Posterior vena cava (tissue), 2 donors: ENCODE measurements at regions of chr12 and their contacts with region 1.

Region 1: DNA sequence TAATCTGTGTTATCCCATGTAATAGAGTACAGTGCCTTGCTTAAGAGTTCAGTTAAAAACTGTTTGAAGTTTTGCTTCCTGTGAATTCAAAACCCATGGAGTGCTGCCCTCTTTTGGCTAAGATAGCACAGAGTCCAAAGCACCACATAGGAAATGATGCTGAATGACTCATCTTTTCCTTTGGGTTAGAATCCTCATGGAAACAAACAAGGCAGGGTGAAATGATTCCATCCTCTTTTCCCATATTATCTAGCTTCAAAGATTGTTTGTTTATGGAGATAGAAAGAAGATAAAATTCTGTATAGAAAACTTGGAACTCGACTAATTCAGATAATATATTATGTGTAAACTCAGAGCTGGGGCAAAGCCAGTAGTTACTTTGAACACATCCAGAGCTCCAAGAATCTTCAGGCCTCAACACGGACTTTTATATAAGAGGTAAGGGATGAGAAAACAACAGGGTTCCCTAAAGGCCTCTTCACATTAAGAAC is 87.4 kb downstream of the OTOGL start:
- DNase-seq: no peak

Region 2: DNA sequence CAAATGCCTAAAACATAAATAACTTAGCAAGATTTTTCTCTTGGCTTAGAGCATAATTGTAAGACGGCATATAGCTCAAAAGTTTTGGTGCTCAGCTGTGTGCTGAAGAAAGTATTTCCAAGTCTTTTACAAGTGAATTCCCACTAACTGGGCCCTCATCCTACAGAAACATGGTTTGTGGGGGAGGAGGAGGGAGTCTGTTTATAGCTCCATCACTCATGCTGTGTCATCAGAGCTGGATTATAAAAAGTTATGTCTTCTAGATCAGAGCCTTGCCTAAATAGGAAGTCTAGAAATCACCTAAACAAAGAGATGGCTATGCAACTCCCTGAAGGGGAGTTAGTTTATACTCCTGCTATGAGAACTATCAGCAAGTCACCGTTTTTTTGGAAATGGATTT is 153.3 kb before region 1 on chr12:
- intact Hi-C with region 1: loop called in 1 of 2 experiments (anchors 10 kb)
- DNase-seq: no peak